ENCODE measurements at regions of chr7 and their contacts with region 1.

Region 1: GRCh38 chr7:75861636-75862035 is 17.2 kb upstream of the RHBDD2 start:
- DNase-seq: peak; percentile 77
- ATAC-seq: peak; percentile 54
- H3K4me3 ChIP-seq: no peak overlapping the region
- H3K27ac ChIP-seq: no peak overlapping the region
- H3K4me1 ChIP-seq: peaks cover 9% of the 10 kb centered on the region
- H3K27me3 ChIP-seq: 0 out of 2 replicates have a peak, but pooled peaks cover 1% of the 10 kb centered on the region
- CTCF ChIP-seq: no peak
- POLR2A ChIP-seq: no peak
- RAD21 ChIP-seq: no peak

Region 2: GRCh38 chr7:75776295-75776971 is 85.2 kb before region 1 on chr7:
- CTCF ChIA-PET with region 1: no interaction called
- POLR2A ChIA-PET with region 1: no interaction called
- dilution Hi-C with region 1: no loop called
- in situ Hi-C with region 1: no loop called
- intact Hi-C with region 1: loop called (anchors 1 kb)
- DNase-seq: peak; percentile 89
- ATAC-seq: peak; percentile 50
- H3K4me3 ChIP-seq: no peak overlapping the region
- H3K27ac ChIP-seq: no peak overlapping the region
- H3K4me1 ChIP-seq: peaks cover 3% of the 10 kb centered on the region; the same call in 1 of the 2 replicates
- H3K27me3 ChIP-seq: peaks cover 24% of the 10 kb centered on the region
- CTCF ChIP-seq: peak; percentile 29
- POLR2A ChIP-seq: no peak
- RAD21 ChIP-seq: peak; percentile 27; the same call in 1 of the 2 replicates

Region 3: GRCh38 chr7:75977743-75978142 is 116.1 kb after region 1 on chr7:
- CTCF ChIA-PET with region 1: no interaction called
- POLR2A ChIA-PET with region 1: no interaction called
- dilution Hi-C with region 1: no loop called
- in situ Hi-C with region 1: no loop called
- intact Hi-C with region 1: no loop called
- DNase-seq: no peak
- ATAC-seq: no peak; the same call in 1 of the 2 replicates
- H3K4me3 ChIP-seq: no peak overlapping the region
- H3K27ac ChIP-seq: no peak overlapping the region
- H3K4me1 ChIP-seq: no peaks in the 10 kb centered on the region
- H3K27me3 ChIP-seq: no peaks in the 10 kb centered on the region
- CTCF ChIP-seq: no peak
- POLR2A ChIP-seq: no peak
- RAD21 ChIP-seq: no peak